PC-9 (cell line): ENCODE measurements at regions of chr13 and their contacts with region 1.

Region 1: GRCh38 chr13:37869756-37870488 is at the start of gene TRPC4:
- DNase-seq: peak; percentile 48 to 71
- H3K4me3 ChIP-seq: peak within 1 kb of the TSS; percentile 63
- H3K27ac ChIP-seq: no peak within 1 kb of the TSS
- H3K4me1 ChIP-seq: peaks cover 12% of the 10 kb centered on the region
- H3K27me3 ChIP-seq: no peaks in the 10 kb centered on the region
- CTCF ChIP-seq: peak; percentile 74
- total RNA-seq, gene TRPC4: 1.4 and 1.7 TPM in 2 replicates

Region 2: GRCh38 chr13:37608750-37609339 is 261.1 kb before region 1 on chr13:
- CTCF ChIA-PET with region 1: no interaction called
- POLR2A ChIA-PET with region 1: no interaction called
- intact Hi-C with region 1: no loop called
- DNase-seq: no peak
- H3K4me3 ChIP-seq: no peak overlapping the region
- H3K27ac ChIP-seq: no peak overlapping the region
- H3K4me1 ChIP-seq: no peaks in the 10 kb centered on the region
- H3K27me3 ChIP-seq: no peaks in the 10 kb centered on the region
- CTCF ChIP-seq: peak; percentile 67

Region 3: GRCh38 chr13:37686501-37686900 is 183.4 kb before region 1 on chr13:
- CTCF ChIA-PET with region 1: interaction called, 11 read pairs
- POLR2A ChIA-PET with region 1: no interaction called
- intact Hi-C with region 1: no loop called
- DNase-seq: no peak
- H3K4me3 ChIP-seq: no peak overlapping the region
- H3K27ac ChIP-seq: no peak overlapping the region
- H3K4me1 ChIP-seq: no peaks in the 10 kb centered on the region
- H3K27me3 ChIP-seq: no peaks in the 10 kb centered on the region
- CTCF ChIP-seq: no peak

Region 4: DNA sequence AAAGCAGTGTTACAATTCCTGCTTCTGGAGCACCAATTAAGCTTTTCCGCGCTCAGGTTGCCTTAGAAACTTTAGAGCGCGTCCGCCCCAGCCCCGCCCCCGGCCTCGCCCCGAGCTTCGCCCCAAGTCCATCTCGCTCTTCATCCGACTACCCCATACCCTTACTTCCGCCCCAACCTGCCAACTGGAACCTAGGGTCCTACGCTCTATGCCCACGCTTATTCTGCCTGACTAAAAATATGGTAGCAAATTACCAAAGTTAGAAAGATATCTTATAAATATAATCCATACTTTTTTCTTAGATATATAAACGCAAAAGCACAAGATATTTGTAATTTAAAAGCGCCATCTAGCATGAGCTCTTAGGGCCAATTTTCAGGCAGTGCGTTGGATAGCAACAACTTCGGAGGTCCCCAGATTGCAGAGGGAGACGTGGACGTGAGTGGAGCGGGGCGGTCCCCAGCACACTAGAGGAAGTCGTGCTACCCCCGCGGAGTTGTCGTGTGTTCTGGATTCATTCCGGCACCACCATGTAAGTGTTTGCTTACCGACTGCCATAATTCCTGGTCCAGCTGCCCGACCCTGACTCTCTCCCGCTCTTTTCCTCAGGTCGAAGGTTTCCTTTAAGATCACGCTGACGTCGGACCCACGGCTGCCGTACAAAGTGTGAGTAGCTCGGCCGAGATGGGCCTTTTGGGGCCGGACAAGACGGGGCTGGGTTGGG is 479.6 kb after region 1 on chr13 and contains the start of gene UFM1:
- CTCF ChIA-PET with region 1: no interaction called
- POLR2A ChIA-PET with region 1: interaction called, 5 read pairs
- intact Hi-C with region 1: loop called (anchors 1 kb)
- DNase-seq: peak; percentile 77 to 82
- H3K4me3 ChIP-seq: peak within 1 kb of the TSS; percentile 84
- H3K27ac ChIP-seq: peak within 1 kb of the TSS; percentile 83
- H3K4me1 ChIP-seq: peaks cover 22% of the 10 kb centered on the region
- H3K27me3 ChIP-seq: no peaks in the 10 kb centered on the region
- CTCF ChIP-seq: no peak
- total RNA-seq, gene UFM1: 20.2 and 32.3 TPM in 2 replicates

Region 5: GRCh38 chr13:38419312-38419873 is 549.5 kb after region 1 on chr13:
- CTCF ChIA-PET with region 1: no interaction called
- POLR2A ChIA-PET with region 1: no interaction called
- intact Hi-C with region 1: no loop called
- DNase-seq: no peak
- H3K4me3 ChIP-seq: no peak overlapping the region
- H3K27ac ChIP-seq: no peak overlapping the region
- H3K4me1 ChIP-seq: no peaks in the 10 kb centered on the region
- H3K27me3 ChIP-seq: no peaks in the 10 kb centered on the region
- CTCF ChIP-seq: no peak

Region 6: DNA sequence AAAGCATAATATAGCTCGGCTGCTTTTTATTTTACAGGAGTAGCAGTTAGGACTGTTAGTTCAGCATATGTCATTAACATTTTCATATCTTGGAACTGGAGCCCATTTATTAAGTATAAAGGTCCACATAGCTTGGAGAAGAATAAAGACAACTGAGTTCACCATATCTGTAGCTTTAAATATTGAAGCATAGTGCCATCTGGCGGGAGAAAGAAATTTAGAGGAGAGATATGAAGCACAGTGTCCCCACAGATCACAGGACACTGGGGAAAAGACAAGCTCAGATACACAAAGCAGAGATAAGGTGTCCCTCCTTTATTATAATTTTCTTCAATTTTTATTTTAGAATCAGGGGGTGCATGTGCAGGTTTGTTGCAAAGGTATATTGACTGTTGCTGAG is 712.2 kb after region 1 on chr13:
- CTCF ChIA-PET with region 1: interaction called, 12 read pairs
- POLR2A ChIA-PET with region 1: no interaction called
- intact Hi-C with region 1: loop called (anchors 5 kb)
- DNase-seq: peak; percentile 10 to 39
- H3K4me3 ChIP-seq: no peak overlapping the region
- H3K27ac ChIP-seq: no peak overlapping the region
- H3K4me1 ChIP-seq: no peaks in the 10 kb centered on the region
- H3K27me3 ChIP-seq: no peaks in the 10 kb centered on the region
- CTCF ChIP-seq: peak; percentile 66

Region 7: GRCh38 chr13:38914070-38914469 is 1044.1 kb after region 1 on chr13:
- CTCF ChIA-PET with region 1: interaction called, 4 read pairs
- POLR2A ChIA-PET with region 1: no interaction called
- intact Hi-C with region 1: loop called (anchors 2 kb)
- DNase-seq: peak in 1 of 2 experiments; percentile 25
- H3K4me3 ChIP-seq: no peak overlapping the region
- H3K27ac ChIP-seq: no peak overlapping the region
- H3K4me1 ChIP-seq: no peaks in the 10 kb centered on the region
- H3K27me3 ChIP-seq: no peaks in the 10 kb centered on the region
- CTCF ChIP-seq: no peak

Region 8: GRCh38 chr13:39379118-39379517 is 1509.2 kb after region 1 on chr13:
- CTCF ChIA-PET with region 1: no interaction called
- POLR2A ChIA-PET with region 1: no interaction called
- intact Hi-C with region 1: no loop called
- DNase-seq: no peak
- H3K4me3 ChIP-seq: no peak overlapping the region
- H3K27ac ChIP-seq: no peak overlapping the region
- H3K4me1 ChIP-seq: no peaks in the 10 kb centered on the region
- H3K27me3 ChIP-seq: no peaks in the 10 kb centered on the region
- CTCF ChIP-seq: no peak